ENCODE measurements at regions of chr19 and their contacts with region 1.

Region 1: DNA sequence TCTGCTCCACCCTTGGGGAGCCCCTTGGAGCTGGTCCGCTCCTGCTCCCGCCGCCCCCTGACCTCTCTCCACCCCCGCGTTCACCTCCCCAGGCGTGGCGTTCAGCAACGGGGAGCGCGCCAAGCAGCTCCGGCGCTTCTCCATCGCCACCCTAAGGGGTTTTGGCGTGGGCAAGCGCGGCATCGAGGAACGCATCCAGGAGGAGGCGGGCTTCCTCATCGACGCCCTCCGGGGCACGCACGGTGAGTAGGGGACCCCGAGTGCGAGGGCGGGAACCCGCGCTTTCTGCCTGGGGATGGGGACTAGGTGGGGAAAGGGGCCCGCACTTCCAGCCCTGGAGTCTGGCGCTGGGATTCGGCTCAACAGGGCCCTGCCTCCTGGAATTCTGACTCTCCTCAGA is 1.7 kb downstream of the CYP2A13 start:
- DNase-seq: no peak
- H3K4me3 ChIP-seq: no peak overlapping the region
- H3K27ac ChIP-seq: no peak overlapping the region
- H3K4me1 ChIP-seq: peaks cover 4% of the 10 kb centered on the region
- H3K27me3 ChIP-seq: no peaks in the 10 kb centered on the region
- CTCF ChIP-seq: no peak

Region 2: GRCh38 chr19:41016488-41017071 is 73.4 kb before region 1 on chr19:
- CTCF ChIA-PET with region 1: interaction called, 10 read pairs
- POLR2A ChIA-PET with region 1: no interaction called
- intact Hi-C with region 1: no loop called
- DNase-seq: no peak
- H3K4me3 ChIP-seq: no peak overlapping the region
- H3K27ac ChIP-seq: no peak overlapping the region
- H3K4me1 ChIP-seq: no peaks in the 10 kb centered on the region
- H3K27me3 ChIP-seq: peaks cover 19% of the 10 kb centered on the region; the same call in 1 of the 2 replicates
- CTCF ChIP-seq: no peak

Region 3: DNA sequence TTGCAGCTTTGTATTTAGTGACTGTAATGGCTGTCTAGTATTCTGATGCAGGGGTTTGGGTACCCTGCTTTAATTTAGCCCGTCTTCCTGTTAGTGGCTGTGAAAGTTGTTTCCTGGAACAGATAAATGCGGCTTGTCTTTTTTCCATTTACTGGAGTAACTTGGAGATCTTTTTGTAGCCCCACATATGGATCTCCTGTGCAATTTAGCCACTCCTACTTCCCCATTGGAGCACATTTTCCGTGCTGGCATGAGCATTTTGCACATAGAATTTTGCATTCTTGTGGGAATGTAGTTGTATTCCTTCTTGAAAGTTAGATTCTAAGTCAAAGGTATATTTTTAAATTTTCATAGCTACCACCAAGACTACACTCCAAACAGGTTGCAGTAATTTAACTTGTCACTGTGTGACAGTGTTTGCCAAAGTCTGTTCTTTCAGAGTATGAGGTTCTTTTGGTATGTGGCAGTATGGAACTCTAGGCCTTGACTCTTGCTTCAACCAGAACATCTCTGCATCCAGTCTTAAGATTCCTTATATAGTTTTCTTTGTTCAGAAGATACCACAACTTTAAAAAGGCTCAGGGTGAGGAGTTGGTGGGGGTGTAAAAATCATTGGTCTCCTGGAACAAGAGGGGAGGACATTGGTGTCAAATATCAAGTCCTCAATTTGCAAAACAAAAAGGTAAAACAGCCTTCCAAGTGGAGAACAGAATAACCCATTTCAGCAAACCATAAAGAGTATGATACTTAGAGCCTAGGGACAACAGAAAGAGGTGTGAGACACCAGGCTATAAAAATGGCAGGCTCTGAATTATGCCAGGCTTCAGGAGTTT is 198.9 kb after region 1 on chr19:
- CTCF ChIA-PET with region 1: no interaction called
- POLR2A ChIA-PET with region 1: no interaction called
- intact Hi-C with region 1: no loop called
- DNase-seq: no peak
- H3K4me3 ChIP-seq: no peak overlapping the region
- H3K27ac ChIP-seq: no peak overlapping the region
- H3K4me1 ChIP-seq: no peaks in the 10 kb centered on the region
- H3K27me3 ChIP-seq: no peaks in the 10 kb centered on the region
- CTCF ChIP-seq: no peak

Measured in PC-9 (cell line).